AG04450 (cell line): ENCODE measurements at regions of chr9 and their contacts with region 1.

Region 1: GRCh38 chr9:21395778-21396717 is 10.8 kb upstream of the IFNA2 start:
- DNase-seq: no peak
- H3K4me3 ChIP-seq: peak overlapping the region; percentile 53
- H3K27ac ChIP-seq: no peak overlapping the region
- H3K27me3 ChIP-seq: peaks cover 26% of the 10 kb centered on the region
- CTCF ChIP-seq: peak; percentile 82

Region 2: DNA sequence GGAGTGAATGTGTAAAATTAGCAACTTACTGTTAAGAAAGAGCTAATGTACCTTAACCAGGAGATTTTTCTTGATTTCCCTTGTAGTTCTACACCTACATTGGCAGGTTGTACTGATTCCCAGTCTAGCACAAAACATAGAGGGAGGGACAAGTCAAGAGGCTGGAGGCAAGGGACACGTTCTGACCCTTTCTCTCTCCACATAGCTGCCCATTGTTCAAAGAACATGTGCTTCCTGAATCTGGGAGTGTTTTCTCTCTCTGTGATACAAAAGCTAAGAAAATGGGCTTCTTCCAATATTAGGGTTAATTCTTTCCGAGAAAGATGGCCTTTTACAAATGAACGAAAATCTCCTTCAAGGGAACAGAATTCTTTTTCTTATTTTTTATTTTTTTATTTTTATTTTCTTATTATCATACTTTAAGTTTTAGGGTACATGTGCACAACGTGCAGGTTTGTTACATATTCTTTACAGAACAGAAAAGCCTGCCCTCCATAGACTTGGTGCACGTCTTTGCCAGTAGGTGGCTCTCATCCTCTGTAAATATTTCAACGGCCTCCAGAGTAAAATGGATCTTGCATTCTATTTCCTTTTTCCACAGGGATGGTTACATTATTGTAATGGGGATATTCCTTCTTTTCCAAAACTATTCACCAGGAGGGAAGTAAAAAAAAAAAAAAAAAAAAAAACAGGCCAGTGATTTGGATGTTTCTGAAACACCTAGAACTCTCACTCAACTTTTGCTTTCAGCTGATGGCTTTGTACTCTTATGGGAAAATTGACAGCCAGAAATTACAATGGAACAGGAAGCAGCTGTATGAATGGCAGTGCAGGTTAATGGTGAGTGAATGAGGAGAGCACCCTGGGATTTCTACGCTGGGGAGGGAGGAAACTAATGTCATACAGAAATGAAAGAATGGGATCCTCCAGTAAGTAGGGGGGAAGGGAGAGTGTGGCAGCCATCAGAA is 77.8 kb before region 1 on chr9:
- CTCF ChIA-PET with region 1: interaction called, 26 read pairs
- POLR2A ChIA-PET with region 1: no interaction called
- DNase-seq: no peak
- H3K4me3 ChIP-seq: no peak overlapping the region
- H3K27ac ChIP-seq: no peak overlapping the region
- H3K27me3 ChIP-seq: peaks cover 5% of the 10 kb centered on the region
- CTCF ChIP-seq: peak; percentile 75

Region 3: DNA sequence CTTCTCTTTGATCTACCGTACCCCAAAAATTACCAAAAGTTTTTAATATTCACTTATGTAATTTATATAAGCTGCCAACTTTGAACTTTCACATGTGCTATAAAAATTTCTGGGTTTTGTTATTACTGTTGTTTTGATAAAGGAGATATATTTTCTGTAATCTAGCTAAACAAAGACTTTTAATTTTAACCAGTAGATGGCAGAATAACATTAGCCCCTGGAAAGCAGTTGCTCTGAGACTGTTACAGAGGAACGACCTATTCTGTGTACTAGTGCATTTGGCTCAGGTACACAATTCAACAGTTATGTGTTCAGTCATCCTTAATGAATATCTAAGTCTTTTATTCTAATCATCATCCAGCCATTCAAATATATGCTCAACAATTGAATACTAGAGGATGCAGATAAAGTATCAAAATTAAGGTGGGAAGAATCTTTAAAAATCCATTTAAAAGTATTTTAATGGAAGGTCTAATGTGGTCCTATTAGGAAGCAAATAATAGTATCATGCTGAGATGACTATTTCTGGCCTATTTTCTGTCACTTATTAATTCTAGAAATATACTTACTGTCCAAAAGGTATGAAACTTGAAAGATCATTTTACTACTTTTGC is 69.4 kb before region 1 on chr9:
- CTCF ChIA-PET with region 1: interaction called, 26 read pairs
- POLR2A ChIA-PET with region 1: no interaction called
- DNase-seq: no peak
- H3K4me3 ChIP-seq: no peak overlapping the region
- H3K27ac ChIP-seq: no peak overlapping the region
- H3K27me3 ChIP-seq: no peaks in the 10 kb centered on the region
- CTCF ChIP-seq: peak; percentile 75

Region 4: DNA sequence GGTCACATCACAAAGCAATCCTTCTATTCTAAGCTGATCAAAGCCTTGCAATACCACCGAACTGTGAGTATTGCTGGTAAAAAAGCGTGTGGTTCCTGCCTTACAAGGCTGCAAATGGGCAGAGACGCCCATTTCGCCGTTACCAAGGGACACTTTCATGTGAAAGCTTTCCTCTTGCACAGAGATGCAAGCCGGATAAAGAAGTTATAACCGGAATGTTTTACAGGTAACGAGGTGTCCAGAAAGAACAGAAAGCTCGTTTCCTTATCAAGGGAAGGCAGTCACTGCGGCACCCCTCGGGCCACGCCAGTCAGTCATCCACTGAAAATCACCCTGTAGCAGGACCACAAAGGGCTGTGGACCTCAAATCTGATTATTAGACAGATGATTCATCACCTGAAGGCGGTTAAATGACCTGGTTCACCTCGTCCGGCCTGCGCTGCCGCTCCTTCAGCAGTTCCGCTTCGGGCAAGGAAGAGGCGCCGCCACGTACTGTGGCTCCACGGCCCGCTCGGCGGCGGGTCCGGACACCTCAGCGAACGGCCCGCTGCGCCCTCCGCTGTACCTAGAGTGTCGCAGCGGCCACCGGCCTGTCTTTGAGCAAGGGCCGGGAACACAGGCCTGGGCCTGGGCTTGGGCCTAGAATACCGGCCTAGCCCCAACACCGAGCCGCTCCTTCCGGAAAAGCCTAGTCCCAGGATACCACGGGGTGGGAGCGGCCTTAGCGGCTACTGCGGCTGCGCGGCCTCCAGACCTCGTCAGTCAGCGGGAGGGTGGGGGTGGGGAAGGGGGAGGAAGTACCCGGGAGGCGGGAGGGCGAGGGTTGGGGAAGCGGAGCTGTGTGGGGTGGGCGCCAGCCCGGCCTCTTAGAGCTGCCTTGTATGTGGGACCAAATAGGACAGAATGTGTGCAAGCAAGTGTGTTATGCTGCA is 61.1 kb before region 1 on chr9 and contains the start of gene KLHL9:
- CTCF ChIA-PET with region 1: interaction called, 28 read pairs
- POLR2A ChIA-PET with region 1: no interaction called
- DNase-seq: peak; percentile 82
- H3K4me3 ChIP-seq: peak within 1 kb of the TSS; percentile 84
- H3K27ac ChIP-seq: peak within 1 kb of the TSS; percentile 81
- H3K27me3 ChIP-seq: no peaks in the 10 kb centered on the region
- CTCF ChIP-seq: no peak
- polyA plus RNA-seq, gene KLHL9: 32.4 and 42.2 TPM in 2 replicates

Region 5: DNA sequence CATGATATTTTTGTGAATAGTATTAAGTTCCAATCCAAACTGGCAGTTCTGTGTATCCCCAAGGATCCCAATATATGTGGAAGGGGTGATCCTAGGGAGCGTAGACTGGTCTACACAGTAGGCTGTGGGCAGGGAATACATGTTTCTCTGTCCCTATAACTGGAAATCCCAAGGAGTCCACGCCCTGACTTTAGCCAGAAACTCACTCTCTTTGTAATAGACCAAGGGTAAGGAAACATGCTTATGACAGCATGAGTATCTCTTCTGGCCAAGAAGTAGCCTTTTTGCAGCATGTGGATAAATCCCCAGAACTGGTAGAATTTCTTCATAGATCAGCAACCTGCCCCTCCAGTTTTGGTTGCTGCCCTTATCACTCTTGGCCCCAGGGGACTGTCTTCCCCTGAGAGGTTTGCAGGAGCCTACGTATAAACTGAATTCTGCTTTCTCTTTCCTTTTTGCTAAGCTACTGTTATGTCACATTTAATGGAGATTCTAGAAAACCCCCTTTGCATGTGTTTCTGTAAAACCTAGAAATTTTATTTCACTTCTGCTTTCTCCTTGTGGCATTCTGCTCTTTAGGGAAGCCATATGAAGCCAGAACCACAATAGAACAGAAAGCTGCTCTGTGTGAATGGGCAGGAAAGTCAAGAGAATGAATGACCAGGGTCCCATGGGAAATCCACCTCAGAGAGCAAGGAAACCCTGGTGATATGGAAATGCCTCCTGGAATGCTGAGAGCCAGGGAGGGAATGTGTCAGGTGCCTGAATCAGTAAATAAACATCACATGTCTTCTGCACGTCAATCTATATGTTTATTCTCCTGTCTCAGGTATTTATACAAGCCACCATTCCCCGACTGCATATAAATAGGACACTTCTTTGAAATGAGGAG is 14.4 kb before region 1 on chr9:
- CTCF ChIA-PET with region 1: interaction called, 17 read pairs
- POLR2A ChIA-PET with region 1: no interaction called
- DNase-seq: no peak
- H3K4me3 ChIP-seq: no peak overlapping the region
- H3K27ac ChIP-seq: no peak overlapping the region
- H3K27me3 ChIP-seq: peaks cover 2% of the 10 kb centered on the region
- CTCF ChIP-seq: no peak

Region 6: GRCh38 chr9:21408817-21409216 is 12.8 kb after region 1 on chr9 and contains the start of gene IFNA8:
- CTCF ChIA-PET with region 1: interaction called, 13 read pairs
- POLR2A ChIA-PET with region 1: no interaction called
- DNase-seq: no peak
- H3K4me3 ChIP-seq: no peak within 1 kb of the TSS
- H3K27ac ChIP-seq: no peak within 1 kb of the TSS
- H3K27me3 ChIP-seq: peaks cover 16% of the 10 kb centered on the region
- CTCF ChIP-seq: no peak
- polyA plus RNA-seq, gene IFNA8: not detected in 2 replicates